AG04450 (cell line): ENCODE measurements at regions of chr3 and their contacts with region 1.

Region 1: GRCh38 chr3:141738022-141738890 is at the start of gene RNF7:
- DNase-seq: peak; percentile 87
- H3K4me3 ChIP-seq: peak within 1 kb of the TSS; percentile 94
- H3K27ac ChIP-seq: peak within 1 kb of the TSS; percentile 71
- H3K27me3 ChIP-seq: no peaks in the 10 kb centered on the region
- CTCF ChIP-seq: peak; percentile 73
- polyA plus RNA-seq, gene RNF7: 97.1 and 113 TPM in 2 replicates

Region 2: DNA sequence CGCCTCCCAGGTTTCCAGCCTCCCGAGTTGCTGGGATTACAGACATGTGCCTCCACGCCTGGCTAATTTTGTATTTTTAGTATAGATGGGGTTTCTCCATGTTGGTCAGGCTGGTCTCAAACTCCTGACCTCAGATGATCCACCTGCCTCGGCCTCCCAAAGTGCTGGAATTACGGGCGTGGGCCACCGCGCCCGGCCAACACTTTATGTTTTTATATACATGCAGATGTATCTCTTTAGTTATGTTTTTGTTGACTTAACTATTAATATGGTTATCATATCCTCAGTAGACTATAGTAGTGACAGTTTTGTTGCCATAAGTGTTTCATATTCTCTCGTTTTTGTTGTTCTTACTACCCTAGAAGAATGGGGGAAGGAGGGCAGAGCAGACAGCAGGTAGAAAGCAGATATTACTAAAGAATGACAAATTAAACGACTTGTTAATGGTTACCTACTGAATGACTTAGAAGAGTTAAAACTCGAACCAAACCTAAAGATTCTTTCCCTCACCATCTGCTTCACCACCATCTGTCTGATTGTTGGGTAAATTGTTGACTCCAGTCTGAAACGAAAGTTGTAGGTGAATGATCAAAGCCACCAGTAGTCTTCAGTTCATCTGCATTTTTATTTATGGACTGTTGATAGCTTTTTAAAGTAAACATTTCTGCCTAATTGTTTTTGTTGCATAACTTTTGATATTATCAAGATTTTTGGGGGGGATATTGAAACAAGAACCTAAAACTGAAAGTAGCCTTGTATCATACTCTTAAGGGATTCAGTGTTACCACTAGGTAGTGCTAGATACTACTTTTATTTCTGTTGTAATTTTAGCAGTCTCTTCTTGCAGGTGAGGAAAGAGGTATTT is 162.1 kb before region 1 on chr3:
- CTCF ChIA-PET with region 1: interaction called, 10 read pairs
- POLR2A ChIA-PET with region 1: no interaction called
- DNase-seq: no peak
- H3K4me3 ChIP-seq: no peak overlapping the region
- H3K27ac ChIP-seq: no peak overlapping the region
- H3K27me3 ChIP-seq: no peaks in the 10 kb centered on the region
- CTCF ChIP-seq: peak; percentile 64

Region 3: GRCh38 chr3:141722081-141722480 is 16.2 kb before region 1 on chr3:
- CTCF ChIA-PET with region 1: interaction called, 14 read pairs
- POLR2A ChIA-PET with region 1: no interaction called
- DNase-seq: no peak
- H3K4me3 ChIP-seq: no peak overlapping the region
- H3K27ac ChIP-seq: no peak overlapping the region
- H3K27me3 ChIP-seq: no peaks in the 10 kb centered on the region
- CTCF ChIP-seq: no peak

Region 4: DNA sequence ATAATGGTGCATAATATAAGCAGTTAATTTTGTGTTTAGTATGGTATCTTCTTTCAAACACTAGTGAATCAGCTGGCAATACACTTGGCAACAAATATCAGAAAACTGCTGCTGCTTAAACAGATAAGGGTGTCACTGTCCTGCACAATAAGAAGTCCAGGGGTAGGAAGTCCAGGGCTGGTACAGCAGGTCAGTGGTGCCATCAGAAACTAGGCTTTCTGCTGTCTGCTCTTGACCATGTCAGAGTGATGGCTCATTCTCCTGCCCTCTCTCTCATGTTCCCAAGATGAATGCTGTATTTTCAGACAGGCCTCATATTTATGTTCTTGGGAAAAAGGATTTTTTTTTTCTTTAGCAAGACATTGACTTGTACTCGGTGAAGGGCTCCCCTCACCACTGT is 15.8 kb after region 1 on chr3:
- CTCF ChIA-PET with region 1: interaction called, 12 read pairs
- POLR2A ChIA-PET with region 1: interaction called, 6 read pairs
- DNase-seq: no peak
- H3K4me3 ChIP-seq: no peak overlapping the region
- H3K27ac ChIP-seq: no peak overlapping the region
- H3K27me3 ChIP-seq: no peaks in the 10 kb centered on the region
- CTCF ChIP-seq: no peak

Region 5: DNA sequence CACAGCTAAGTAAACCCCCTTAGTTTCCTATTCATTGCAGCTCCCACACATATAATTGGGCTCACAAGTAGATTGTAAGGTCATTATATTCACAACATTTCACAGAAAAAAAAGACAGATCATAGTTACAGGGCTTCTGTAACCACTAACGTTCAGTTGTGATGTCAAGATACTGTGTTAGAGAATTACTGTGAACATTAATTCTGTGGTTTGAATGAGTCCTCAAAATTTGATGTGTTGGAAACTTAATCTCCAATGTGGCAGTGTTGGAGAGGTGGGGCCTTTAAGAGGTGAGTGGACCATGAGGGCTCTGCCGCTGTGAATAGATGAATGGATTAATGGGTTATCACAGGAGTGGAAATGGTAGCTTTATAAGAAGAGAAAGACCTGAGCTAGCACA is 46.3 kb after region 1 on chr3:
- CTCF ChIA-PET with region 1: no interaction called
- POLR2A ChIA-PET with region 1: no interaction called
- DNase-seq: no peak
- H3K4me3 ChIP-seq: no peak overlapping the region
- H3K27ac ChIP-seq: no peak overlapping the region
- H3K27me3 ChIP-seq: peaks cover 7% of the 10 kb centered on the region
- CTCF ChIP-seq: no peak